Ascending aorta (tissue), 2 donors: ENCODE measurements at regions of chr18 and their contacts with region 1.

Region 1: DNA sequence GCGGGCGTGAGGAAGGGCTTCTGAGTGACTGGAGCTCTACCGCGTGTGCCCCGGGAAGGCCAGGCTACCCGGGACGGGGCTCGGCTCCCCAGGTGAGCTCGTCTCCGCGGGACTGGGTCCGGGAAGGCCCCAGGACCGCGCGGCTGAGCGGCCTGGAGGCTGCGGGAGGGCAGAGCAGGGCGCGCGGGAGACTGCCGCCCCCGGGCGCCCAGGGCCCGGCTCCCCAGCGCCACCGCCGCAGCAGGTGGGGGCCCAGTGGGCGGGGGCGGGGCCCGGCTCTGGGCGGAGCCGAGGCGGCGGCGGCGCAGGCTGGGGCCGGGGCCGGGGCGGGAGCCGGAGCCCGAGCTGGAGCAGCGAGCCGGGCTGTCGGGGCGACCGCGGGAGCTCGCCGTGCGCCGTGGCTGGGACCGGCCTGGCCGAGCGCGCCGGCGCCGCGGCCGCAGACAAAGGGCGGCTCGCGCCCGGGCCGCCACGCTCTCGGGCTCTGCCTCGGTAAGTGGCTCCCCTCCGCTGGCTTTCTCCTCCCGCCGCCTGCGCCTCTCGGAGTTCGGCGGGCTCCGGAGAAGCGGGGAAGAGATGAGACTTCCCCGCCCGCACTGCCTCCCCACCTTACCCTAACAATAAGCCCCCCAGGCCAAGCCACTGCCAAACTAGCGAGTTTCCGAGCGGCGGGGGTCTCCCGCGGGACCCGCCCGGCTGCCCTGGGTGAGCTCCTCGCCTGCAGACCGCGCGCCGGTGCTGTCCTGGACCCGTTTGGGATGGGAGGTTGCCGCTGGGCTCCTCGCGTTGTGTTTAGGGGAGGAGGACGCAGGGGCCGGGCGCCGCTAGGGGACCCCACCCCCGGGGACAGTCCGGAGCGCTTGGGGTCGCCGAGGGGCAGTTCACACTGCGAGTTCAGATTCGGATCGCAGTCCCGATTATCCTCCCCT is at the start of gene MAPK4:
- DNase-seq: peak in 1 of 2 donors; percentile 70
- H3K4me3 ChIP-seq: peak within 1 kb of the TSS; percentile 77 to 82
- H3K27ac ChIP-seq: peak within 1 kb of the TSS; percentile 81 to 86
- H3K4me1 ChIP-seq: peaks cover 0 to 12% of the 10 kb centered on the region in 2 donors
- H3K27me3 ChIP-seq: no peaks in the 10 kb centered on the region
- CTCF ChIP-seq: no peak
- total RNA-seq, gene MAPK4: 1.2 TPM

Region 2: DNA sequence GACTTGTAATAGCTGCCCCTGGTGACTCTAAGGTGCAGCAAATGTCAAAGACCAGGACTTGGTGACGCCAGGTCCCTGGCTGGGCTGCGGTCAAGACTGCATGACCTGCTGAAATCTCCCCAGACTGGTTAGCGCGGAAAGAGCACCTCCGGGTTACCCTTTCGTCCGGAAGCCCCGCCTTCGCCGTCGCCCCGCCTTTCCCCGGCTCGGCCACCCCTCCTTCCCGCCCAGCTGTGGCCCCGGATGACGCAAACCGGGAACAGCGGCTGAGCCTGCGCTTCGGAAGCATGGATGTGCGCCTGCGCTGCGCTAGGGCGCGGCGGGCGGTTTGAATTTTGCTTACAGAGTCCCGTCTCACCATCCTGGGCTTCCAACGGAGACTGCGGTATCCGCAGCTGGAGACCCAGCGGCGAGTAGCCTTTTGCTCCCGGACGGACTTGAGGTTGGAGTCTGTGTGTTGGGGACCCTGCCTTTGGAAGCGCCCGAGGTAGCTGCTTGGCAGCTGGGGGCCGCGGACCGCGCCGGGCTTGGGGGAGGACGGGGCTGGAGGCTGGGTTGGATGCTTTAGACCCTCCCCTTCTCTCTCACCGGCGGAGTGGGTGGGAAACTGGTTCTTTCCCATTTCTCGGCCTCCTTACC is 185.1 kb before region 1 on chr18 and contains the start of gene SKA1:
- intact Hi-C with region 1: loop called (anchors 10 kb)
- DNase-seq: peak; percentile 62 to 93
- H3K4me3 ChIP-seq: peak within 1 kb of the TSS; percentile 50 to 70
- H3K27ac ChIP-seq: peak within 1 kb of the TSS; percentile 14 to 72
- H3K4me1 ChIP-seq: peaks cover 0 to 7% of the 10 kb centered on the region in 2 donors
- H3K27me3 ChIP-seq: no peaks in the 10 kb centered on the region
- CTCF ChIP-seq: no peak
- total RNA-seq, gene SKA1: not detected

Region 3: DNA sequence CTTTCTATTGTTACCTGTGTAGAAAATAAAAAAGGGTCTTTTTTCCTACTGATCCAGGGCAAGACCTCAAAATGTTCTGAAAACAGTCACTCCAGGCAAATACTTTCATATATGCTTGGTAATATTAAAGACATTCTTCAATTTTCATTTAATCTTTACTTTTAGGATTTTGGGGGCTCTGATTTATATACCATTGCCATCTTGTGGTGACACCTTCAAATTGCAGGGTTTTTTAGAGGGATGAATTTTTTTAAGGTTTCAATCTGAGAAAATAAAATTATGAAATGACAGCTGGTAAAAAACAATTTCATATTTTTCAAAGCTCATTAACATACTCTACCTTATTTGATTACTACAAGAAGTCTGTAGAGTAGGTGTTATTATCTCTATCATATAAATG is 26.7 kb after region 1 on chr18:
- intact Hi-C with region 1: no loop called
- DNase-seq: no peak
- H3K4me3 ChIP-seq: no peak overlapping the region
- H3K27ac ChIP-seq: no peak overlapping the region
- H3K4me1 ChIP-seq: no peaks in the 10 kb centered on the region
- H3K27me3 ChIP-seq: no peaks in the 10 kb centered on the region
- CTCF ChIP-seq: peak in 1 of 3 experiments; percentile 18

Region 4: DNA sequence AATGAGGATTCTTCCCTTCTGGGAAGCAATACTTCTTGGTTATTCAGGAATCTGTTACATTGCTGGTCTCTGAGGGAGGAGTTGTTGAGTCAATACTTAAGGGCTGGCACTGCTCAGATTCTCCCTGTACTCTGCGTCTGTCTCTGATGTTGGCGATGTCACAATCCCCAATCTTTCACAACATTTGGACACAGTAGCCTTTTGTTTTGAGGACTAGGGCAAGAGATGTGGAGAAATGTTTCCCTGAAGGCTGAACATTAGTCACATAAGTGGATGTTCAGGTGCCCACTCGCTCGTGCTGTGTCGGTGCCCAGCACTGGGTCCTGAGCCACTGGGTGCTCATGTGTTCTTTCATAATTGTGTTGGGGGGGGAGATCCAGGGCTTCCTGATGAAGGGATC is 54.8 kb after region 1 on chr18:
- intact Hi-C with region 1: loop called (anchors 5 kb)
- DNase-seq: peak in 1 of 2 donors; percentile 70
- H3K4me3 ChIP-seq: no peak overlapping the region
- H3K27ac ChIP-seq: no peak overlapping the region
- H3K4me1 ChIP-seq: no peaks in the 10 kb centered on the region
- H3K27me3 ChIP-seq: no peaks in the 10 kb centered on the region
- CTCF ChIP-seq: no peak

Region 5: DNA sequence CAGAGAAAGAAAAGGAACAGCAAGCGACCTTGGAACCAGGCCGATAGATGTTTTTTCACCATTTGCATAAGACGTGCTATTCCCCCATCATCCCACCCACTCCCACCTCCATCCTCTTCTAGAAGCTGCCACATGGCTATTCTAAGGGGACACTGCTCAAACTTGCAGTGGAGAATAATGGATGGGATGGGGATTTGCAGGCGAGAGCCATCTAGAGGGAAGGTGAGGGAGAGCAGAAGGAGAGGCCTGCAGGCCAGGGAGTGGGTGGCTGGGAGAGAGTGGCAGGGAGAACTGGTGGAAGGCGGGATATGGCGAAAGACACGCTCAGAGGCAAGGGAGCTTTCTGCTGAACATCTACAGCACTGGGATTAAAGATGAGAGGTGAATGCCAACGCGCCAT is 84.8 kb after region 1 on chr18:
- intact Hi-C with region 1: no loop called
- DNase-seq: no peak
- H3K4me3 ChIP-seq: no peak overlapping the region
- H3K27ac ChIP-seq: no peak overlapping the region
- H3K4me1 ChIP-seq: peaks cover 3 to 10% of the 10 kb centered on the region in 2 donors
- H3K27me3 ChIP-seq: no peaks in the 10 kb centered on the region
- CTCF ChIP-seq: no peak

Region 6: GRCh38 chr18:50707855-50708469 is 147.9 kb after region 1 on chr18:
- intact Hi-C with region 1: loop called (anchors 2 kb)
- DNase-seq: peak in 1 of 2 donors; percentile 76
- H3K4me3 ChIP-seq: no peak overlapping the region
- H3K27ac ChIP-seq: peak overlapping the region in 1 of 2 donors; percentile 1
- H3K4me1 ChIP-seq: no peaks in the 10 kb centered on the region
- H3K27me3 ChIP-seq: no peaks in the 10 kb centered on the region
- CTCF ChIP-seq: no peak

Region 7: GRCh38 chr18:50726960-50727589 is 167.1 kb after region 1 on chr18:
- intact Hi-C with region 1: no loop called
- DNase-seq: no peak
- H3K4me3 ChIP-seq: no peak overlapping the region
- H3K27ac ChIP-seq: no peak overlapping the region
- H3K4me1 ChIP-seq: peaks cover 0 to 4% of the 10 kb centered on the region in 2 donors
- H3K27me3 ChIP-seq: no peaks in the 10 kb centered on the region
- CTCF ChIP-seq: no peak

Region 8: GRCh38 chr18:51135795-51136194 is 575.8 kb after region 1 on chr18:
- intact Hi-C with region 1: no loop called
- DNase-seq: no peak
- H3K4me3 ChIP-seq: no peak overlapping the region
- H3K27ac ChIP-seq: no peak overlapping the region
- H3K4me1 ChIP-seq: peaks cover 0 to 6% of the 10 kb centered on the region in 2 donors
- H3K27me3 ChIP-seq: no peaks in the 10 kb centered on the region
- CTCF ChIP-seq: no peak